GM10248 (cell line): ENCODE measurements at regions of chr5 and their contacts with region 1.

Region 1: GRCh38 chr5:116574367-116575325 is at the start of gene SEMA6A:
- DNase-seq: peak; percentile 88
- CTCF ChIP-seq: no peak

Region 2: DNA sequence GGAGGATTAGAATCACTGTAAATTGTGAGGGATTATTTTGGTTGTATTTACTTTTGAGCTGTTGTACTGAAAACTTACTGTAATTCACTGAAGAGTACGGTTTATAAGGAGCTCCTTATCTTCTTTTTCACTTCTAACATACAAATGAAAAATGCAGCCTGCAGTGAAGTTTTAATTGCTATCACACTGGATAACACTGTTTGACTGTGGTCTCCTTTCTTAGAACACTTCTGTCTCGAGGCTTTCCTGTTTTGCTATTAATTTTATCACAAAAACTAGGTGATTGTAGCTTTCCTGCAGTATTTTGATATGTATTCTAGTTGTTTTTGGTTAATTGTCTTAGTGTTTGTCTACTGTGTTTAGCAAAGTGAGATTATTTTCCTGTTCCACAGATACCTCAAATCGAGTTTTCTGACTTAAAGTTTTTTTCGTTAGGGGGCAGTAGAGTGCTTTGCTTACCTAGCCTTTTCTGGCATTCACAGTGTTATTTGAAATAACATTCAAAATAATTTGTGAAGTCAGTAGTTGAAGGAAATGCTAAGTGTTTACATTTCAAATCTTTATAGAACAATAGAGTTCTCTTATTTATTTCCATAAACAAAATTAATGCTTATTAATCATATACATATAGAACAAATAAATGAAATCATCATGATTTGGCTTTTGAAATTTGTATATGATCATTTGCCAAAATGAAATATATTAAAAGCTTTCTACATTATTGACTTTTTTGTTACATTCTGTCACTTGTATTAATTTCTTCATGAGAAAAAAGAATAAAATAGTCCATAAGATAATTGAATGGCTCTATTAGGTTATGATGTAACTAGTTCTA is 436.9 kb before region 1 on chr5:
- CTCF ChIA-PET with region 1: interaction called, 19 read pairs
- POLR2A ChIA-PET with region 1: no interaction called
- DNase-seq: peak; percentile 22
- CTCF ChIP-seq: peak; percentile 55

Region 3: GRCh38 chr5:116454417-116454927 is 120.2 kb before region 1 on chr5:
- CTCF ChIA-PET with region 1: no interaction called
- POLR2A ChIA-PET with region 1: no interaction called
- DNase-seq: peak; percentile 64
- CTCF ChIP-seq: no peak

Region 4: GRCh38 chr5:116532762-116533525 is 41.7 kb before region 1 on chr5:
- CTCF ChIA-PET with region 1: no interaction called
- POLR2A ChIA-PET with region 1: no interaction called
- DNase-seq: no peak
- CTCF ChIP-seq: no peak

Region 5: DNA sequence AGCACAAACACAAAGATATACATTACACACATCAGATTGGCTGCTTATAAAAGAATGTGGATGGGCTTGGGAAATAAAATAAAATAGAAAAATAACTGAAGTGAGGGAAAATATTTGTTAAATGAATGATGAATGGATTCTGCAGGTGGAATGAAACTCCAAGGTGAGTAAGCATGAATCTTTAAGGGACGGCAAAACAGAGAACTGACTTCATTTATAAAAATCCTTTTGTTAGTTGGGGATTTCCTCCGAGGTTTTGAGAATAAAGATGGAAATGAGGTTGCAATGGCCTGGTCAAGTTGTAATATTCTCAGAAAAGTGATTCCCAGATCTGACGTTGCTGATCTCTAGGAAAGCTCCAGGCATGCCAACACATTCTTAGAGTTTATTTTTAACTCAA is 20.9 kb after region 1 on chr5:
- CTCF ChIA-PET with region 1: interaction called, 14 read pairs
- POLR2A ChIA-PET with region 1: no interaction called
- DNase-seq: no peak
- CTCF ChIP-seq: no peak

Region 6: DNA sequence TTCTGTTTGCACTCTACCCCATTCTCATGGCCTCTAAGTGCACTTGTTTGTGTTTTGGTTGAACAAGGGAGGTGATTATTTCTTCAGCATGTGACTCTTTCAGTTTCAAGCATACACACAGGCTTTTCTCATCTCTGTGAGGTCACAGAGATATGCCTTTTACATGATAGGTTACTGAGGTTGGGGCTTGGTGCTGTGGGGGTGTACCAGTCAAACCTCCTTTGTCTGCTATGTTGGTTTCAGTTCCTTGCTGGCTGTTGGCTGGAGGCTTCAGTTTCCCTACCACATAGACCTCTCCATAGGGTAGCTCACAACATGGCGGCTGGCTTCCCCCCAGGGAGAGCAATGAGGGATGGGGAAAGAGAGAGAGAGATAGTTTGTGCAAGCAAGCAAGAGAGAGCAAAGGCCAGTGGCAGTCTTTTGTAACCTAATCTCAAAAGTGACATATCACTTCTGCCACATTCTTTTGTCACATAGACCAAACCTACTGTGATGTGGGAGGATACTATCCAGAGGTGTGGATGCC is 96.6 kb after region 1 on chr5:
- CTCF ChIA-PET with region 1: interaction called, 10 read pairs
- POLR2A ChIA-PET with region 1: no interaction called
- DNase-seq: peak; percentile 60
- CTCF ChIP-seq: no peak

Region 7: DNA sequence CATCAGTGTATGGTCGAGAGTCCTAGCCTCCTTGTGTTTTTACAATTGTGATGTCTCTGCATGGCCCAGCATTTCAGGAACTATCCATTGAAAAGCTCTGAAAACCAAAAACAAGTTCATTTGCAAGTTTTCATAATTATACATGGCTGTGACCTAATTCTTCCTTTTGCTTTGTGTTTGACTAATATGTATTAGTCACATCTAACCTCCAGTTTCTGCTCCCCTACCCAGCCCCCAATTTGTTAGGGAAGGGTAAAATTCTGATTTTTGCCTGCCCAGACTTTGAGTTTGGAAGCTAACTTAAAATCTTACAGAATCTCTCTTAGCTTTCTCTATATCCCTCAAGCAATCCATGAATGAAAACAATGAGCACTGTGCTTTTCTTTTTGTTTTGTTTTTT is 128.1 kb after region 1 on chr5:
- CTCF ChIA-PET with region 1: interaction called, 14 read pairs
- POLR2A ChIA-PET with region 1: no interaction called
- DNase-seq: peak; percentile 40
- CTCF ChIP-seq: no peak

Region 8: DNA sequence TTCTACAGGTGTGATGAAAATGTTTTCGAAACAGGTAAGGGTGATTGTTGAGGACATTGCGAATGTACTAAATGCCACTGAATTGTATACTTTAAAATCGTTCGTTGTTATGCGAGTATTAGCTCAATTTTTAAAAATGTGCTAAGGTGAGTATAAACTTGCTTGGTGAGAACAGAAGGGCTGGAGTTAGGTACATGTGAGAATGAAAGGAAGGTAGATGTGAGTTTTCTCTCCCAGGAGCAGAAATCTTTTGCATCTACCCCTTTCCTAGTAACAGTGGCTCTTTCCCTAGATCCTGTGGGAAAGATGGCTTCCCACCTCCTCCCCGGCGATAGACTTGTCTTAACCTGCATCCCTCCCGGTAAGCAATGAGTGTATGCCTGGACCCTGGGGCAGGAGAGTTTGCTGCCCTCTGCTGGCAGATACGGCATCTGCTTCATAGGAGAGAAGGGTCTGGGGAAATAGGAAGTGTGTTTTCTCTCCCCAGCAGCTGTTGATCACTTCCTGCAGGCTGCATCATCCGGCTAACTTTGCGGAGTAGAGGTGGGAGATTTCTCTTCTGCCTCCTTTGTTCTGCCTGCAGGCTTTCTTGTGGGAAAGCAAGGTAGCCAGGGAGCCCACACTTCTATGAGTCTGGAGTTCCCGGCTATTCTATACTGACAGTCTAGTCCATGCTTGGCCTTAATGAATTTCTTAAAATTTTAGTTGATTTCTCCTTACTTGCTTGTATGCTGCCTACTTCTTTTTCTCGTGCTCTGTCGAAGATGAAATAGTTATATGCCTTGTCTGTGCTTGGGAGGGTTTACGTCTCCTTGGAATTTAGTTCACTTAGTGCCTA is 373.3 kb after region 1 on chr5:
- CTCF ChIA-PET with region 1: interaction called, 29 read pairs
- POLR2A ChIA-PET with region 1: no interaction called
- DNase-seq: peak; percentile 70
- CTCF ChIP-seq: peak; percentile 86